Sigmoid colon (tissue), 7 donors: ENCODE measurements at regions of chr9 and their contacts with region 1.

Region 1: DNA sequence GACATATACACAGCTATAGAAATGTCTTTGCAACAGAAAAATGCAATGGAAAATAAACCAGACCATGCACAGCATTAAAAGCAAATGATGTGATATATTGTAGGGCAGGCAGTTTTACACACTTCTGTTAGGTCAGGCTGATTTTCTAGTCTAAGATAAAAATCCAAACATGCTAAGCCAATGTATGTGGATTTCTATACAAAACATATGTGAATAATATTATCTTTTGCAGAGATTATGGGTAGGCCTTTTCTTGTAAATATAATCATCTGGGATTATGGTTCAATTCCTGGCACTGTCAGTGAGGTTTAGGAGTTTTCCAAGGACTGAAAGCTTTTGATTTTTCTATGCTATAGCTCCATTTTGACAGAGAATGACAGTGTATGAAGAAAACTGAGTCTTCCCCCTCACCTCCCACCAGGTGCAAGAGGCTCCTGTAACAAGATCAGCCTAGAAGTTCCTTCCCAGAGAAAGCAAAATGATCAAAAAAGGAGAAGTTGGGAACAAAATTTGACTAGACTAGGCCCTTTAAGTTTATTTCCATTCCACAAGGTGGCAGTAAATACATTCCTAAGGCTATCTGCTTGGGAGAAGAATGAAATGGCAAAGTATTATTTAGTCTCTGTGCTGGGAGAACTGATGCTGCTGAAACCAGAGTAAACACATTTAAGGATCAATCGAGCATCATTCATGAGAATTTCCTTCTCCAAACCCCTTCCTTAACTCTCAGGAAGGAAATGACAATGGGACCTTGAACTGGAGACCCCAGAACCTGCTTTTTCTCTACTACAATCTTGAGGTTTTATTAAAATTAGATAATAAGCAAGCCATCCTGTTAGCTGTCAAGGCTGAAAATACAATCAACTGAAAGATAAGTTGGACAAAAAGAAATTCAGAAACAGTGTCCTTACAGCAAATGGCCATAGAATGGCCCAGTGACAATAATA is 133.0 kb upstream of the TUT7 start:
- DNase-seq: no peak
- H3K4me3 ChIP-seq: no peak overlapping the region
- H3K27ac ChIP-seq: peak overlapping the region in 1 of 4 donors; percentile 52
- H3K4me1 ChIP-seq: peaks cover 0 to 22% (median 7%) of the 10 kb centered on the region in 4 donors
- H3K27me3 ChIP-seq: no peaks in the 10 kb centered on the region
- CTCF ChIP-seq: peak; percentile 61 to 66 (median 65)
- EP300 ChIP-seq: no peak
- POLR2A ChIP-seq: no peak

Region 2: DNA sequence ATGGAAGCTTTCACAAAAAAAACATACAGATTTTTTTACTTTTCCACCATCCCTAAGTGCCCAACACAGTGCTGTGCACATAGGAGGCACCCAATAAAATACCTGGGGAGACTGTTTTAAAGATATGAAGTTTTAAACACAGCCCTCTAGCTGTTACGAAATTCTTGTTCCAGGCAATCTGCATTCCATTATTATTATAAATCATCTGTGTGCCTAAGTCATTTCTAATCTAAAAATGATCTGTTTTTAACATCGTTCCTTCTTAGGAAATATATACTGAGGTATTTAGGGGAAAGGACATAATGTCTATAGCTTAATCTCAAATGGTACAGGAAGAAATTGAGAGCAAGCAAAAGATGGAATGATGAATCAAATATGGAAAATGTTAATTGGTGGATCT is 172.1 kb before region 1 on chr9:
- intact Hi-C with region 1: no loop called
- DNase-seq: no peak
- H3K4me3 ChIP-seq: no peak overlapping the region
- H3K27ac ChIP-seq: no peak overlapping the region
- H3K4me1 ChIP-seq: no peaks in the 10 kb centered on the region
- H3K27me3 ChIP-seq: no peaks in the 10 kb centered on the region
- CTCF ChIP-seq: no peak
- EP300 ChIP-seq: no peak
- POLR2A ChIP-seq: no peak

Region 3: DNA sequence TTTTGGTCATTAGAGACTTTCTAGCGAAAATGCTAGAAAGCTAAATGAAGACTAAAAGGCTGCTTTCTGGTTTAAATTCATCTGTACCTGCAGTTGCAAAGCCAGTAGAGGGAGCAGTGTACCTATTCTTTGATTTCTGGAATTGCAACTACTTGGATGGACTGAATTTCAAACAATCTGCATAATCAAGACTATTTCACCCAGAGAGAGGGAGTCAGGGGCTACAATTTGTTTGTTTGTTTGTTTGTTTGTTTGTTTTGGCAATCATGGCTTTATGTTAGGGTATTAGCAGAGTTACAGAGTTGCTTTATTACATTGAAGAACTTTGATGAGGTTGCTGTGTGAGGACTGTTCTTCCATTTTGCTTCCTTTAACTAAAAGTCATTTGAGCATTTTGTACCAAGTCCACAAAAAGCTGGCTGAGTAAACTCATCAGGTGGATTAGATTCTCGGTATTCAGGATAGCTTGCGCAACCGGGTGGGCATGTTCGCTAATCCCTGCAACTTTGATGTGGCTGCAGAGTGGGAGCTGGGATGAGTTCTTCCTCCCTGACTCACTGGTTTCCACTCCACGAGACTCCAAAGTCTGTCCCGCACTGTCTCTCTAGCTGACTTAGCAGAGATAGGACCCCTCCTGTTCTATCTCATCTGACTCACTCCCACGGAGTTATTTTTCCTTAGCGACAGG is 53.0 kb before region 1 on chr9:
- intact Hi-C with region 1: loop called (anchors 5 kb)
- DNase-seq: peak; percentile 86
- H3K4me3 ChIP-seq: no peak overlapping the region
- H3K27ac ChIP-seq: peak overlapping the region in 3 of 4 donors; percentile 14 to 49 (median 26)
- H3K4me1 ChIP-seq: peaks cover 0 to 9% (median 4%) of the 10 kb centered on the region in 4 donors
- H3K27me3 ChIP-seq: no peaks in the 10 kb centered on the region
- CTCF ChIP-seq: peak; percentile 73 to 78 (median 75)
- EP300 ChIP-seq: no peak
- POLR2A ChIP-seq: no peak

Region 4: DNA sequence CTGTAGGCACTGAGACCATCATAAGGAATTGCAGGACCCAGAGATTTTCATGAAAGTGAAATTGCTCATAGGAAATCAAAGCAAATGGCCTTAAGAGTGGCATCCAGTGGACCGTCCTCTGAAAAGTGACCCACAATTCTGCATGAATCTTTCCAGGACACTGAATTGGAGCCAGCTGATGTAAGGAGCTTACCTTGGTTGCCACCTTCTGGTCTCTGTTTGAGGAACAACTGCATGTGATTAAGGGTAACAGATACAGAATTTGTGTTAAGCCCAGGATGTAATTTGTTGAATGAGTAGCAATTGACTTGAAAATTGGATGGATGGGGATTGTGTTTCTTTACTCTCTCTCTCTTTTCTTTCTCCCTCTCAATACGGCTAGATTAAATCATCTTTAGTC is 510.0 kb after region 1 on chr9:
- intact Hi-C with region 1: loop called (anchors 5 kb)
- DNase-seq: no peak
- H3K4me3 ChIP-seq: no peak overlapping the region
- H3K27ac ChIP-seq: no peak overlapping the region
- H3K4me1 ChIP-seq: no peaks in the 10 kb centered on the region
- H3K27me3 ChIP-seq: no peaks in the 10 kb centered on the region
- CTCF ChIP-seq: peak in 1 of 4 experiments; percentile 9
- EP300 ChIP-seq: no peak
- POLR2A ChIP-seq: no peak

Region 5: DNA sequence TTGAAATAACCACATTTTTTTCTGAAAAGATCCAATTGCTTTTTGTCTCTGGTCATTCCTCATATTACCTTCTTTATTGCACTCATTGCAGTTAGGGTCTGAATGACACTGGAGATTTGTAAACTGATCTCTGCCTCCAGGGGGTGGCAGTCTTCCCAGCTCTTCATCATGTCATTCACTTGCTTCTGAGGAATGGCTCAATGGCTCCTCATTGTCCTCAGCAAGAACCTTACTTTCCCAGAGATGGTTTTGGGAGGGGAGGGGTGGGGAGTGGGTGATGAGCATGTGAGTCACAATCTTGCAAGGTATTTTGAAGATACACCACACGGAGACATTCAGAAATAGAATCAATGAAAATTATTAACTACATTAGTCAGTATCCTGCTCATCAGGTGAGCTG is 619.9 kb after region 1 on chr9:
- intact Hi-C with region 1: no loop called
- DNase-seq: no peak
- H3K4me3 ChIP-seq: no peak overlapping the region
- H3K27ac ChIP-seq: no peak overlapping the region
- H3K4me1 ChIP-seq: peaks cover 0 to 21% (median 16%) of the 10 kb centered on the region in 4 donors
- H3K27me3 ChIP-seq: no peaks in the 10 kb centered on the region
- CTCF ChIP-seq: no peak
- EP300 ChIP-seq: no peak
- POLR2A ChIP-seq: no peak